ENCODE measurements at regions of chr3 and their contacts with region 1.

Region 1: DNA sequence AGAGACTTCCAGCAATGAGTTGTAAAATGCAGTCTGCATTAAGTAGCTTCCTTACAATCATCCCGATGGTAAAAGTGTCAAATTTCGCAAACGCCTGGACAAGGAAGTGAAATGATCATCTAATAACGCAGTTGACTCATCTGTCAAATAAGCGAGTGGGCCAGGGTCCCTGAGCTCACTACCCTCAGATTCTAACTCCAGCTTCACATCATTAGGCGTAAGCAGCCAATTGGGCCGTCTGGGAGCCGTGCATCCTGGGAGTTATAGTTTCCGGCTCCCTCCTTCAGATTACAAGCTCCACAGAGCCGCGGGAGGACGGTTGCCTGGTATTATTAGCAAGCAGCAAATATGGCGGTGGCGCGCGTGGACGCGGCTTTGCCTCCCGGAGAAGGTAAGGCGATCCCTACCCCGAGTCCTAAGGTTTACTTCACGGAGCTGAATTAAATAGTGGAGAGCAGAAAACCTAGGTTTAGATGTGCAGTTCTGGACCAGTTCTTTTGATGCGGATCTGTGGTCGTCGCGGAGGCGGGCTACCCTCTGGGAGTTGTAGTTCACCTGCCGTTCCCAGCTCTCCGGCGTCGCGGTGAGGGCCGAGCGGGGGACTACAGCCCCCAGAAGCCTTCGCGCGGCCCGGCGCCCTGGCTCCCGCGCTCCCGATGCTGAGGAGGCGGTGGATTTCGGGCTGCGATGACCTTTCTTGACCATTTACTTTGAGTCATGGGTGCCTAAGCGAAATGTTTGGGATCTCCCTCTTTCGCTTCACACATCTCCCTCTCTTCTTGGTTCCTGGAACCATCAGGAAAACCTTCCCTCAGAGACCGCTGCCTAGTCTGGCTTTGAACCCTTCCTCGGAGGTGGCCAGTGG is at the start of gene CEP97:
- H3K4me3 Mint-ChIP-seq: peak within 1 kb of the TSS; percentile 97
- H3K27ac Mint-ChIP-seq: peak within 1 kb of the TSS; percentile 91
- H3K4me1 Mint-ChIP-seq: peaks cover 31% of the 10 kb centered on the region
- H3K27me3 Mint-ChIP-seq: no peaks in the 10 kb centered on the region

Region 2: DNA sequence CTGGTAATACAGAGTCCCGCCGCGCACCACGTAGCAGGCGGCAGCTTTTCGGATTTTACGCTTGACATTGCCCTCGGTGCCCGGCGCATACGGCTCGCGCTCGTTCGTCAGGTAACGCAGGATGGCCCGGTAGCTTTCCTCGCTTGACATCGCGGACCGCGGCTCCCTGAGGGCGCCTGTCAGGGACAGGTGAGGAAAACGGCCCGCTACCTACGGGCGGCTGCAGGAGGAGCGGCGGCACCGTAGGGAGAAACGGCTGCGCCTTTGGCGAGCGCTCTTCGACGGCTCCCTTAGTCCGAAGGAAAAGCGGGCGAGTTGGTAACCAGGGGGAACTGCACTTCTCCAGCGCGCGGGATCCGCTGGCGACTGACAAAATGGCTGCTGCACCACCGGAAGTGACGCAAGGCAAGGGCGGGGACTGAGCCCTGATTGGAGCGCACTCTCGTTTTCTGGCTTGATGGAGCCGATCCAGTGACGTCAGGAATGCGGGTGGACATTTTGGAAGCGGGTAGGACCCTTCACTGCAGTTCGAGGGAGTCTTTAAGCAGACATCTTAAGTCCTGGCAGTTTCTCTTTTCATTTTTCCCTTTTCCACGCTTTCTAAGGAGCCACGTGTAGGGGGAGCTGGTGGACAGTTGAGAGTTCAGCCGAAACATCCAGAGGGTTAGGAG is 47.7 kb before region 1 on chr3 and contains the start of gene ZBTB11:
- intact Hi-C with region 1: loop called (anchors 1 kb)
- H3K4me3 Mint-ChIP-seq: peak within 1 kb of the TSS; percentile 89
- H3K27ac Mint-ChIP-seq: peak within 1 kb of the TSS; percentile 98
- H3K4me1 Mint-ChIP-seq: peaks cover 46% of the 10 kb centered on the region
- H3K27me3 Mint-ChIP-seq: no peaks in the 10 kb centered on the region

Region 3: DNA sequence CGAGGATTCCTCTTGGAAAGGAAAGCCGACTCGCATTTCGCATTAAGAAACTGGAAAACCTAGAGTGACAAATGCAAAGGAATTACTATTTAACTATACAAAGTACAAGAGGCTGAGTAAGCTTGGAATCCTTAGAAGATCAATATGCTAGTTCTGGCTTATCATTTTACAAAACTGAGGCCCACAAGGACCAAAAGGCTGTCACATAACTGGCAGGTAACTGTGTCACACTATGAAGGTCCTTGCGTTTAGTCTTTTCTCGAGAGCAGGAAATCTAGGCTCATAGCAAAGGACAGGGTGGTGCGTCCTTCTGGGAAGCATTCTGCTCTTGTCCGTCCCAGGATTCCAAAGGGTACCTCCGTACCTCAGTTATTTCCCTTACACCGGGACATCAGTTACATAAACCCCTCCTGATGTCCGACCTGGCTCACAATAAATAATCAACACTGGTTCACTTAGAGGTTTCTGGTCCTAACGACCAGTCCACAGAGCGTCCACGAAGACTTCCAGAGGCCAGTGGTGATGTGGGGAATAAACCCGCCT is 38.6 kb before region 1 on chr3:
- intact Hi-C with region 1: loop called (anchors 2 kb)
- H3K4me3 Mint-ChIP-seq: peak overlapping the region; percentile 97
- H3K27ac Mint-ChIP-seq: peak overlapping the region; percentile 99
- H3K4me1 Mint-ChIP-seq: peaks cover 45% of the 10 kb centered on the region
- H3K27me3 Mint-ChIP-seq: no peaks in the 10 kb centered on the region

Region 4: DNA sequence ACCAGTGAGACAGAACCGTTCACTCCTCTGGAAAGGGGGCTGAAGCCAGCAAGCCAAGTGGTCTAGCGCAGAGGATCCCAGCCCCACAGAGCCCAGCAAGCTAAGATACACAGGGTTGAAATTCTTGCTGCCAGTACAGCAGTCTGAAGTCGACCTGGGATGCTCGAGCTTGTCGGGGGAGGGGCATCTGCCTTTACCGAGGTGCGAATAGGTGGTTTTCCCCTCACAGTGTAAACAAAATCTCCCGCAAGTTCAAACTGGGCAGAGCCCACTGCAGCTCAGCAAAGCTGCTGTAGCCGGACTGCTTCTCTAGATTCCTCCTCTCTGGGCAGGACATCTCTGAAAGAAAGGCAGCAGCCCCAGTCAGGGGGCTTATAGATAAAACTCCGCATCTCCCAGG is 11.3 kb after region 1 on chr3:
- intact Hi-C with region 1: no loop called
- H3K4me3 Mint-ChIP-seq: no peak overlapping the region
- H3K27ac Mint-ChIP-seq: no peak overlapping the region
- H3K4me1 Mint-ChIP-seq: no peaks in the 10 kb centered on the region
- H3K27me3 Mint-ChIP-seq: no peaks in the 10 kb centered on the region

Region 5: DNA sequence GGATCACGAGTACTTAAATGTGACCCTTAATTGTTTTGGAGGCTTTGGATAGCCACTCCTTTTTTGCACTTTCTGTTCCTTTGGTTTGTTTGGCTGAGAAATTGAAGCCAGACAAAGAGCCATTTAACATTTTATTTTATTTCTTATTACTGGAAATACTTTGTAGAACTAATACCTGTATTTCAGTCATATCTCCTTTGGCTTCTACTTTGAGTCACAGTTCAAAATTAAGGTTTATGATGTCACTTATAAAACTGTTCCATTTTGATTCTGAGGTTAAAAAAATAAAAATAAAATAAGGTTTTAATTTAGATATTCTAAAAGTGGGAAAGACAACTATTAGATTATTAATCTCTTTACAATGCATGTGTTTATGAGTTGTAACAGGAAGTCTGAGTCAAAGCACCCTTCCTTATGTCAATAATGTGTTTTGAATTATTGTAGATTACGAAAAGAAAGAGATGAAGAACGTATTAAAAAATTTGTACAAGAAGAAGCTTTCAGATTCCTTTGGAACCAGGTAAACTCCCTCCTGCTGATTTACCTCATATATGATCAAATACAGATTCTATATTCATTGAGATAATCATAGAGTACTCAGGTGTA is 37.6 kb after region 1 on chr3:
- intact Hi-C with region 1: loop called (anchors 5 kb)
- H3K4me3 Mint-ChIP-seq: no peak overlapping the region
- H3K27ac Mint-ChIP-seq: no peak overlapping the region
- H3K4me1 Mint-ChIP-seq: peaks cover 9% of the 10 kb centered on the region
- H3K27me3 Mint-ChIP-seq: no peaks in the 10 kb centered on the region

Region 6: DNA sequence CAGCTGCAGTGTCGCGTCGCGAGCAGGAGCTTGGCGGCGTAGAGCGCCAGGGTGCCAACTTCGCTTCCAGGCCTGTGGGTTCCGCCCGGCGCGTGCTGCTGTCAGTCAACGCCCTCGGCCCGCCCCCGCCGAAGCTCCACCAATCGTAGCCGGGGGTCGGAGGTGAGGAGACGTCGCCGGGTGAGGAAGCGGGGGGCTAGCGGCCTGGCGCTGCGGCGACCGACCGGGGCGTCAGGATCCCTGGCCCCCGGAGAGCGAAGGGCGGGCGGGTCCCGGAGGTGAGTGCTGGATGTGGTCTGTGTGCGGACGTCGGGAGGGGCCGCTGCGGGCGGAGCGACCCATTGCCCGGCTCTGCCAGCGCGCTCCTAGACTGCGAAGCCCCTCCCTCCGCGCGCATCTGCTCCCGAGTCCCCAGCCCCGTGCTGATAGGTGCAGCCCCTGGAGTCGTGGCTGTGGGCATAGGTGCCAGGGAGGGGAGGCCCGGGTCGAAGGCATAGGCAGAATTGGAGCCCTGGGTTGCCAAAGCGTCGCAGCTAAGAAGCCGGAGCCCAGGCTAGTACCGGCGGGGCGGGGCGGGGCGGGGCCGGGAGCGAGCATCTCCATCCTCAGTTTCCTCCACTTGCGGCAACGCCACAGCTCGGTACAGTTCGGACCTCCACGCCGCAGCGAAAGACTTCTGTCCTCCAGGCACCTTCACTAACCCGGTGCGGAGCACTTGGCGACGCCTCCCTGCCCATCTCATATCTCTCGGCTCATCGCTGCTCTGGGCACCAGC is 54.7 kb after region 1 on chr3 and contains the start of gene NXPE3:
- intact Hi-C with region 1: loop called (anchors 1 kb)
- H3K4me3 Mint-ChIP-seq: peak within 1 kb of the TSS; percentile 86
- H3K27ac Mint-ChIP-seq: peak within 1 kb of the TSS; percentile 93
- H3K4me1 Mint-ChIP-seq: peaks cover 43% of the 10 kb centered on the region
- H3K27me3 Mint-ChIP-seq: no peaks in the 10 kb centered on the region

Measured in dendritic cell treated with granulocyte-macrophage colony-stimulating factor and Interleukin-4, amounts not matched to agents 40 ng/mL and 50 ng/mL, for 4 days (primary cell).